HCT116 (cell line): ENCODE measurements at regions of chr3 and their contacts with region 1.

Region 1: GRCh38 chr3:85740561-85740960 is 781.8 kb downstream of the CADM2 start:
- DNase-seq: no peak
- ATAC-seq: no peak
- H3K4me3 ChIP-seq: no peak overlapping the region
- H3K27ac ChIP-seq: no peak overlapping the region
- H3K4me1 ChIP-seq: no peaks in the 10 kb centered on the region
- H3K27me3 ChIP-seq: no peaks in the 10 kb centered on the region
- CTCF ChIP-seq: no peak
- POLR2A ChIP-seq: no peak
- RAD21 ChIP-seq: no peak

Region 2: GRCh38 chr3:85783291-85783690 is 42.7 kb after region 1 on chr3:
- CTCF ChIA-PET with region 1: no interaction called
- POLR2A ChIA-PET with region 1: no interaction called
- RAD21 ChIA-PET with region 1: no interaction called
- intact Hi-C with region 1: no loop called
- DNase-seq: no peak
- ATAC-seq: no peak
- H3K4me3 ChIP-seq: no peak overlapping the region
- H3K27ac ChIP-seq: no peak overlapping the region
- H3K4me1 ChIP-seq: no peaks in the 10 kb centered on the region; a peak in 1 of 4 replicates
- H3K27me3 ChIP-seq: no peaks in the 10 kb centered on the region
- CTCF ChIP-seq: no peak
- POLR2A ChIP-seq: no peak
- RAD21 ChIP-seq: no peak

Region 3: DNA sequence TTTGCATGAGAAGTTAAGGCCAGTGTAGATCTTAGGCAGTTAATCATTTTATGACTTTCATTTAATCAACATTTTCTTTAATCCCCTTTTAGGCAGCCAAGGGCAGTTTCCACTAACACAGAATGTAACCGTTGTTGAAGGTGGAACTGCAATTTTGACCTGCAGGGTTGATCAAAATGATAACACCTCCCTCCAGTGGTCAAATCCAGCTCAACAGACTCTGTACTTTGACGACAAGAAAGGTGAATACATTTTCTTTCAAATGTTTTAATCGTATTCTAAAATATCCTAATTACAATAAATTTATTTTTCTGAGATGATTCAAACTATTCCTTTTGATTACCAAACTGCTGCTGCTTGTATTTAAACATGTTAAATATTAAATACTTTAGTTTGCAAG is 61.4 kb after region 1 on chr3:
- CTCF ChIA-PET with region 1: no interaction called
- POLR2A ChIA-PET with region 1: no interaction called
- RAD21 ChIA-PET with region 1: no interaction called
- intact Hi-C with region 1: loop called (anchors 10 kb)
- DNase-seq: no peak
- ATAC-seq: no peak
- H3K4me3 ChIP-seq: no peak overlapping the region
- H3K27ac ChIP-seq: no peak overlapping the region
- H3K4me1 ChIP-seq: no peaks in the 10 kb centered on the region
- H3K27me3 ChIP-seq: no peaks in the 10 kb centered on the region
- CTCF ChIP-seq: no peak
- POLR2A ChIP-seq: no peak
- RAD21 ChIP-seq: no peak